MCF 10A (cell line): ENCODE measurements at regions of chr14 and their contacts with region 1.

Region 1: DNA sequence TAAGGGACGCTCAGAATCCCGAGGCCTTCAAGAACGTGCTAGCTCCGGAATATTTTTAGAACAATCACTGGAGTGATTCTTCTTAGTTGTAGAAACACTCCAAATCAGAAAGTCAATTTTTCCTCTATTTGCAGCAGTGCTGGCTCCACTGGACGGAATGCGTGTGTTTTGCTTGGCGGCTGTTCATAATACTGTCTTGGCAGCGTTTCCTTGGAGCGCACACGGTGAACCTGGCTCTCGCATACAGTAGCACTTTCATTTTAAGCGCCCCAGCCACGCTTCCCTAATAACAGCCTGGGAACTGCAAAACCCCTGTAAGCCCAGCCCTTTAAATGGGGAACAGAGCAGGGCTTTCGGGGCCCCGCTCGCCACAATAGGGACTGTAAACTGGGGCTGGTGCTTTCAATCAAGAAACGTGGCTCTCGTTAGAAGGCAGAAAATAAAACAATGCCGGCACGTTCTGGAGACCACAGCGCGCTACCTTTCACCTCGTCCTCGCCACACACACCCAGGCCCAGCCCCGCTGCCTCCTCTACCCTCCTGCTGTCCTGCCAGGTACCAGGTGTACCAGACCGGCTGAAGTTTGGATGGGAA is 79.9 kb downstream of the BCL11B start:
- DNase-seq: peak; percentile 85
- H3K4me3 Mint-ChIP-seq: peak overlapping the region; percentile 72
- H3K27ac Mint-ChIP-seq: peak overlapping the region; percentile 57
- H3K4me1 Mint-ChIP-seq: peaks cover 13% of the 10 kb centered on the region
- H3K27me3 Mint-ChIP-seq: no peaks in the 10 kb centered on the region
- CTCF ChIP-seq: no peak

Region 2: DNA sequence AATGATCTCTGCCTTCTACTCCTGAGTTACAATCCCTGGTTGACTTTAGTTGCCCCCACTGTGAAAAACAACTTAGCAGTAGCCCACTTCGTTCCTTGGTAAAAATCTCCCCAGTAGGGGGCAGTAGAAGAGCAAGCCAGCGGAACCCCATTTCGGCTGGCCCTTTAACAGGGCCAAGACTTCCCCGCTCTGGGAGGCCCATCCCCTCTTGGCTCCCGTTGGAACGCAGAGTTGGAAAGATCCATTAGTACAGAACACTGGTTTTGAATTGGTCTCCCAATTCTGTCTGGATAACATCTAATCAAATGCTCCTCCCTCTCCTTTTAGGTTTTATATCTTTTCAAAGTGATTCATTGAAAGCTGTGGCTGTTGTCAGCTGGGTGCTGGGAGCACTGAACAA is 1053.5 kb before region 1 on chr14:
- CTCF ChIA-PET with region 1: interaction called, 6 read pairs
- POLR2A ChIA-PET with region 1: no interaction called
- intact Hi-C with region 1: loop called (anchors 10 kb)
- DNase-seq: peak; percentile 45
- H3K4me3 Mint-ChIP-seq: no peak overlapping the region
- H3K27ac Mint-ChIP-seq: no peak overlapping the region
- H3K4me1 Mint-ChIP-seq: peaks cover 12% of the 10 kb centered on the region
- H3K27me3 Mint-ChIP-seq: no peaks in the 10 kb centered on the region
- CTCF ChIP-seq: peak; percentile 46

Region 3: DNA sequence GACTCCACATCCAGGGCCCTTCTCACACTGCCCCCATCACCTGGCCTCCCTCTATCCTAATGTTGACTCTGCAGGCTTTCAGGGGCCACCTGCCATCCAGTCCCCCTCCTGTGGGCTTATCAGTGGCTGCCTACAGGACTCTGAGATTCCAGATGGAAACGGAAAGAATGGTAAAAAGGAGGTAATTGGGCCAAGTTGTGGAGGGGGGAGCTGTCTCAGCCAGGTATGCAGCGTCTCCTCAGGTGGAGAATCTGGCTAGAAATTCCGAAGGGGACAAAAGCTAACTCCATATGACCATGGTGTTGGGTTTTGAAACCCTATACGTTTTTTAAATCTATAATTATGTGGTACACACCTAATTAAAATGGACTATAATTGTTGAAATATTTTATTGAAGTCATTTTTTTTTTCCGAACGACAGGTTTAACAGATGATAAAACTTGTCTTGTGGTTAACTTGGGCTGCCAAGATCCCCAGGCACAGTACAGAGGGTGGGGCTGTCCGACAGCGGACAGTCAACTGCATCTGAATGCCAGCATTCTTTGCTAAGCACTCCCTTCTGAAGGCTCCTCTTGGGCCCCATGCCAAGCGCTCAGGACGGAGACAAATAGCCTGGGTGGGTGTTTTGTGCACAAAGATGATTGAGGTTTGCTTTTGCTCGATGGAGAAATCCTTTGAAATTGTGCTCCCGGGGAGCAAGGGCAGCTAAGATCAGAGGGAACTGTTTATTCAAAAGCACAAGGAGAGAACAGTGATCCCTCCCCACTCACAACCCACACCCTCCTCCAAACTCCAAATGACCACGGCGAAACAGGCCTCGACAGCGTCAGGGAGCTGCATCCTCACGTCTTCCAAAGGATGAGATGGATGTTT is 285.8 kb before region 1 on chr14:
- CTCF ChIA-PET with region 1: no interaction called
- POLR2A ChIA-PET with region 1: no interaction called
- intact Hi-C with region 1: loop called (anchors 5 kb)
- DNase-seq: peak; percentile 96
- H3K4me3 Mint-ChIP-seq: peak overlapping the region; percentile 28
- H3K27ac Mint-ChIP-seq: peak overlapping the region; percentile 80
- H3K4me1 Mint-ChIP-seq: peaks cover 52% of the 10 kb centered on the region
- H3K27me3 Mint-ChIP-seq: no peaks in the 10 kb centered on the region
- CTCF ChIP-seq: no peak

Region 4: GRCh38 chr14:99296517-99296916 is 104.4 kb after region 1 on chr14:
- CTCF ChIA-PET with region 1: no interaction called
- POLR2A ChIA-PET with region 1: no interaction called
- intact Hi-C with region 1: no loop called
- DNase-seq: peak; percentile 5
- H3K4me3 Mint-ChIP-seq: no peak overlapping the region
- H3K27ac Mint-ChIP-seq: no peak overlapping the region
- H3K4me1 Mint-ChIP-seq: no peaks in the 10 kb centered on the region
- H3K27me3 Mint-ChIP-seq: peaks cover 27% of the 10 kb centered on the region
- CTCF ChIP-seq: no peak